Posterior cingulate gyrus (tissue), 11 donors: ENCODE measurements at regions of chr7 and their contacts with region 1.

Region 1: DNA sequence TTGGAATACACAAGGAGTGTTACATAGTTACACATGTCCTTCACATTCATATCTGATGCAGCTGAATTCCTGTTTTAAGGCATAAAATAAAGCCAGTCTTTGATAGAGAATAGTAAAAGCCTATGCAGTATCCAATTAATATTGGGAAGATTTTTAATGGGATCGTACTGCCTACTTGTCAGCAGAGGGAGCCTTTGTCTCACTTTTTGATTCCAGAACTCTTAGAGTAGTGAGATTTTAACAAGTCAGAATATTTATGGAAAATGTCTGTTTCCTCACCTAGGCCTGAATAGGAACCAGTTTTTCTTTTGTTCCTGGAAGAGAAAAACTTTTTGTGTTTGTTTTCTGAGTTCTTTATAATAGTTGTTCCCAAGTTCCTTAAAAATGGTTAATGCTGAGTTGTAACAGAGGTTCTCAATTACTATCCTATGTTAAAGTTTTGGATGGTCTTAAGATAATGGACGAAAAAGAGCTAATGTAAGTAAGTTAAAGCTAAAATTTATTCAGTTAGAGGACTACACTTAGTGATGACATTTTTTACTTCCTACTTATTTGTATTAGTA is 114.0 kb downstream of the BBS9 start:
- DNase-seq: no peak

Region 2: GRCh38 chr7:33024189-33024757 is 219.1 kb before region 1 on chr7:
- intact Hi-C with region 1: no loop called
- DNase-seq: no peak

Region 3: GRCh38 chr7:33744293-33745075 is 501.1 kb after region 1 on chr7:
- intact Hi-C with region 1: loop called (anchors 10 kb)
- DNase-seq: no peak

Region 4: GRCh38 chr7:33904681-33905388 is 661.4 kb after region 1 on chr7:
- intact Hi-C with region 1: loop called (anchors 10 kb)
- DNase-seq: peak in 9 of 10 donors; percentile 22 to 91 (median 39)

Region 5: DNA sequence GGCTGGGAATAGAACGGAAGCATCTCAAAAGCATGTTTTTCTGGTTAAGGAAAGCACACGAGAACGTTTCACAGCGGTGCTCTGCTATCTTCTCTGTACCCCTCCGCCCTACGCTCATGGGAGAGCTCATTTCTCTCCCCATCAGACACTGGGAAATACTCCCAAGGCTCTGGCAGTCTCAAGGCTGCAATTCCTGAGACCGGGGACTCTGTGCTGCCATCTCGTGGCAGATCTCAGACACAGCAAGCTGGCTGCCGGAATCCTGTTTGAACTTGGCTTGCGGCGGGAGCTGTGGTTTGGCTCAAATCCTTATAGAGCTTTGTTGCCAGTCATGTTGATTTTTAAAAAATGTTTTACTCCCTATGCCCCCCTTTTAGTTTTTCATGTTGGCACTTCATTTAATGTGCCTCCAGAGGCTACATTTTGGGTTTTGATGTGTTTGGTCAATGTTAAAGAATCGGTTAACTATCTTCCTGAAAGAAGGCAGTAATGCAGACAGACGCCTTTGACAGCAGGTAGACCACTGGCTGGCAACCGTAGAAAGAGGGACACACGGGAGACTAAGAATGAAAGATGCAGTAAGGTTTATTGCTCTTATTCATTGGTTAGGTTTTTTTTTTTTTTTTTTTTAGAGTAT is 689.5 kb after region 1 on chr7:
- intact Hi-C with region 1: loop called (anchors 2 kb)
- DNase-seq: peak; percentile 71 to 98 (median 86)